AG04449 (cell line): ENCODE measurements at regions of chr7 and their contacts with region 1.

Region 1: GRCh38 chr7:100444311-100445278 is 8.3 kb upstream of the PPP1R35 start:
- DNase-seq: no peak
- H3K4me3 ChIP-seq: no peak overlapping the region
- CTCF ChIP-seq: no peak

Region 2: GRCh38 chr7:100380196-100380595 is 64.4 kb before region 1 on chr7:
- CTCF ChIA-PET with region 1: no interaction called
- POLR2A ChIA-PET with region 1: no interaction called
- DNase-seq: no peak
- H3K4me3 ChIP-seq: no peak overlapping the region
- CTCF ChIP-seq: no peak

Region 3: DNA sequence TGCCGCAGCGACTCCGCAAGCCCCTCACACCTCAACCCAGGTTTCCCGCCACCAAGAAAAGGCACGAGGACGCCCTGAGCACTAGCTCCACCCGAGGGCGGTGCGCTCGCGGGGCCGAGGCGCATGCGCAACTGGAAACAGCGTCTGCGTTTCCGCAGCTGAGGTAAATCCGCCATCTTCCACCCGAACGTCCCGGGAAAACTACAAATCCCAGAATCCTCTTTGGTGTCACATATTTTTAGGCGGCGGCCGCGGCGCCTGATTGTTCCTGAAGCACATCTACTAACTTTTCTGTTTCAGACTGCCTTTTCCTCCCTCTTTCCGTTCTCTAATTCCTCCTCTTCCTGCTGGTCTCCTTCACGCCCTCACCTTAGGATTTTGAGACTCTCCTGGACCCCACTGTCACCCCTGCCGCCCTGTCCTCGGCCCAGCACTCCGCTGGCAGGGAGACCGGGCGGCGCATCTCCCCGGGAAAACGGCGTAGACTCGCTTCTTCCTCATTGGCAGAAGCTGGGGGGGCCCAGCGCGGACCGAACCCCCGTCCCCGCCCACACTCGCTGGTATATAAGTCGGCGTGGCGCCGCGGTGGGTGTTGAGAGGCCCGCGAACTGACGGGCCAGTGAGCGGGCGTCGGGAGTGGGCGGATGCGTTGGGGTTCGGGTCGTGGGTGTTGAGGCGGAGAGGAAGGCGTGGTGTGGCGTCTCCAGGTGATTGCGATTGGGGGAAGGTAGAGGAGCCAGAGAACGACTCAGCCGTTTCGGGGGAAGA is 16.2 kb before region 1 on chr7 and contains the start of gene ZCWPW1:
- CTCF ChIA-PET with region 1: no interaction called
- POLR2A ChIA-PET with region 1: interaction called, 19 read pairs
- DNase-seq: peak; percentile 81
- H3K4me3 ChIP-seq: peak within 1 kb of the TSS; percentile 92
- CTCF ChIP-seq: no peak

Region 4: GRCh38 chr7:100456558-100456957 is 12.0 kb after region 1 on chr7:
- CTCF ChIA-PET with region 1: interaction called, 11 read pairs
- POLR2A ChIA-PET with region 1: no interaction called
- DNase-seq: no peak
- H3K4me3 ChIP-seq: no peak overlapping the region
- CTCF ChIP-seq: no peak

Region 5: GRCh38 chr7:100469227-100470044 is 24.8 kb after region 1 on chr7:
- CTCF ChIA-PET with region 1: interaction called, 22 read pairs
- POLR2A ChIA-PET with region 1: interaction called, 4 read pairs
- DNase-seq: no peak
- H3K4me3 ChIP-seq: no peak overlapping the region
- CTCF ChIP-seq: peak; percentile 98

Region 6: DNA sequence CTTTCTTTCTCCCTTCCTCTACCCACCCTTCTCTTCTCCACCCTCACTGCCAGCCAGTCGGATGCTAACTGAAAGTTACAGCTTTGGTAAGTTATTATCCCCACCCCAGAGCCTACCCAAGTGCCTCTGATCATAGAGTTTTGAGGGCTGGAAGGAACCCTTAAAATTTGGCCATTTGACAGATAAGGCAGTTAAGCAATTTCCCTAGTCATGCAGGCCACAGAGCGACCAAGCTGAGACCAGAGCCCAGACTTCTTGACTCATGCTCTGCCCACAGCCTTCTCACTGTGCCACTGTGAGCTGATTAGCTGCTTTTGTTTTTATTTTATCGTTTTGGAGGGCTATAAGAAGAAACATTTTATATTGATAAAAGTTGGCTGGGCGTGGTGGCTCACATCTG is 111.9 kb after region 1 on chr7:
- CTCF ChIA-PET with region 1: interaction called, 13 read pairs
- POLR2A ChIA-PET with region 1: no interaction called
- DNase-seq: no peak
- H3K4me3 ChIP-seq: no peak overlapping the region
- CTCF ChIP-seq: no peak

Region 7: GRCh38 chr7:100563809-100564400 is 119.3 kb after region 1 on chr7:
- CTCF ChIA-PET with region 1: interaction called, 13 read pairs
- POLR2A ChIA-PET with region 1: no interaction called
- DNase-seq: no peak
- H3K4me3 ChIP-seq: no peak overlapping the region
- CTCF ChIP-seq: peak; percentile 92

Region 8: GRCh38 chr7:100736671-100737070 is 292.1 kb after region 1 on chr7:
- CTCF ChIA-PET with region 1: no interaction called
- POLR2A ChIA-PET with region 1: no interaction called
- DNase-seq: no peak
- H3K4me3 ChIP-seq: no peak overlapping the region
- CTCF ChIP-seq: no peak